ENCODE measurements at regions of chr1 and their contacts with region 1.

Region 1: GRCh38 chr1:160731990-160732389 is 7.1 kb upstream of the SLAMF7 start:
- DNase-seq: no peak
- H3K4me3 Mint-ChIP-seq: no peak overlapping the region
- H3K27ac Mint-ChIP-seq: peak overlapping the region; percentile 78
- H3K4me1 Mint-ChIP-seq: peaks cover 38% of the 10 kb centered on the region
- H3K27me3 Mint-ChIP-seq: no peaks in the 10 kb centered on the region

Region 2: GRCh38 chr1:159510229-159510541 is 1221.8 kb before region 1 on chr1:
- intact Hi-C with region 1: no loop called
- DNase-seq: no peak
- H3K4me3 Mint-ChIP-seq: no peak overlapping the region
- H3K27ac Mint-ChIP-seq: no peak overlapping the region
- H3K4me1 Mint-ChIP-seq: no peaks in the 10 kb centered on the region
- H3K27me3 Mint-ChIP-seq: peaks cover 2% of the 10 kb centered on the region

Region 3: DNA sequence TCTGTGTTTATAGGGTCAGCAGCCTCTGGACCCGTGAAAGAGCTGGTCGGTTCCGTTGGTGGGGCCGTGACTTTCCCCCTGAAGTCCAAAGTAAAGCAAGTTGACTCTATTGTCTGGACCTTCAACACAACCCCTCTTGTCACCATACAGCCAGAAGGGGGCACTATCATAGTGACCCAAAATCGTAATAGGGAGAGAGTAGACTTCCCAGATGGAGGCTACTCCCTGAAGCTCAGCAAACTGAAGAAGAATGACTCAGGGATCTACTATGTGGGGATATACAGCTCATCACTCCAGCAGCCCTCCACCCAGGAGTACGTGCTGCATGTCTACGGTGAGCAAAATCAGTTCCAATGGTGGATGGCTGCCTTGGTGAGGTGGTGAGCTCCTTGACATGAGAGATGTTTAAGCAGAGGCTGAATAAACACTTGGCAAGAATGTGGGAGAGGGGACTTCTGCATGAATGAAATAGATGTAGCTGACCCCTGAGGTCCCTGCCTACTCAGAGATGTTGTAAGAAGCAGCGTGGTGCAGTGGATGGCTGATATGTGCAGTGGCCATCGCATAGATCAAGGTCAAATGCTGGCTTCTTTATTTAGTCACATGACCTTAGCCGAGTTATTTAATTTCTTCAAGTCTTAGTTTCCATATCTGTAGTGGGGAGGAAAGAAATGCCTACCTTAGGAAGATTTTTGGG is 16.3 kb after region 1 on chr1:
- intact Hi-C with region 1: loop called (anchors 1 kb)
- DNase-seq: no peak
- H3K4me3 Mint-ChIP-seq: peak overlapping the region; percentile 3
- H3K27ac Mint-ChIP-seq: peak overlapping the region; percentile 61
- H3K4me1 Mint-ChIP-seq: peaks cover 92% of the 10 kb centered on the region
- H3K27me3 Mint-ChIP-seq: no peaks in the 10 kb centered on the region

Measured in activated T-helper 1 cell treated with anti-CD3 and anti-CD28 coated beads, Interleukin-12 subunit alpha, Interleukin-12 subunit beta, Interleukin-2, Interleukin-4 antibody, amounts not matched to agents 30 ng/mL and 10 ng/mL and 1 ng/mL, durations not matched to agents 14 hours and 24 hours and 36 hours (primary cell).